Adrenal gland (tissue), 19 donors: ENCODE measurements at regions of chr5 and their contacts with region 1.

Region 1: GRCh38 chr5:141701360-141702119 is 19.5 kb upstream of the ARAP3 start:
- DNase-seq: no peak
- H3K4me3 ChIP-seq: no peak overlapping the region
- H3K27ac ChIP-seq: no peak overlapping the region
- H3K4me1 ChIP-seq: peaks cover 0 to 11% of the 10 kb centered on the region in 2 donors
- H3K27me3 ChIP-seq: peaks cover 28% of the 10 kb centered on the region
- CTCF ChIP-seq: no peak
- POLR2A ChIP-seq: no peak

Region 2: DNA sequence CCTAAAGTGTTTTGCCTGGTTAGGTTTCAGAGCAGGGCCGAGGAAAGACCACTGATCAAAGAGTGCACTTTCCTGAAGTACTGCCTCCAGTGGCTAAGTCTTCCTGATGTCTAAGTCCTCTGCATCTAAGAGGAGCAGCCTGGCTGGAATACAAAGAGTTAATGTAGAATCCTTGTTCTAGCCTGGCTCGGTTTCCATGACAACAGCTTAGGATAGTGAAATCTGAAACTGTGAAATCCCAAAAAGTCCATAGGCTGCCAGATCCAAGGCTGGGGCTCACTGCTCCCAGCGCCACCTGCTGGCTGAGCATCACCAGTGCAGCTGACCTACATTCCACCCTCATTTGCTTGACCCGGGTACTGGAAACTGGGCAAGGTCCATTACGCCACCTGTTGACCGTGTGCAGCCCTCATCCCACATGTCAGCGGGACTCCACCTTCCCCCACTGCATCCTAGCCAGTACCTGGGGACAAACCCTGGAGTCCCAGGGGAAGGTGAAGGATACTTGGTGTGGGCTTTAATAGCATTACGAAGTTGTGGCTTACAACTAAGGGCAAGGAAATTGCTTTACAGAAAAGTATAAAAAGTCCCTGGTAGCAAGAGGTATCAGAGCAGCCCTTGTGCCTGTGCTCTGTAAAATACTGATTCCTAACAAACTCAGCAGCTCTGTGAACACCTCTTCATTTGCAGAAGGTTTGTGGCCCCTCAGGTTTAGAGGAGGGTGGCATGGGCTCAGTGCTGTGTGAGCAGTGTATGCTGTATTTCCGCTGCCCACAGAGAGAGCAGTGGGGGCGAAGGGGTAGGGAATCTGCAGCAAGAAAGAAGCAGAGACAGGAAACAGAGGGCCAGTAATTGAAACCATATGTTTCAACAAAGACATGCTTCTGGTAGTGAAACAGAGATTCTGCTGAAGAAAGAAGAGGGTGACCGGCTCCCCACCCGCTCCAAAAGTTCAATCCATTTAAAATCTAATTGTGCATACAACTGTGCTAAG is 176.6 kb before region 1 on chr5:
- intact Hi-C with region 1: no loop called
- DNase-seq: peak; percentile 91 to 98 (median 94)
- H3K4me3 ChIP-seq: no peak overlapping the region
- H3K27ac ChIP-seq: peak overlapping the region; percentile 6 to 81 (median 36)
- H3K4me1 ChIP-seq: peaks cover 46 to 61% of the 10 kb centered on the region in 2 donors
- H3K27me3 ChIP-seq: no peaks in the 10 kb centered on the region
- CTCF ChIP-seq: peak; percentile 99 to 100 (median 100)
- POLR2A ChIP-seq: no peak

Region 3: GRCh38 chr5:141811287-141812155 is 110.0 kb after region 1 on chr5:
- intact Hi-C with region 1: loop called in 1 of 2 experiments (anchors 10 kb)
- DNase-seq: peak in 2 of 7 donors; percentile 14 to 81
- H3K4me3 ChIP-seq: no peak overlapping the region
- H3K27ac ChIP-seq: peak overlapping the region in 1 of 5 donors; percentile 30
- H3K4me1 ChIP-seq: peaks cover 0 to 1% of the 10 kb centered on the region in 2 donors
- H3K27me3 ChIP-seq: no peaks in the 10 kb centered on the region
- CTCF ChIP-seq: peak; percentile 14 to 49 (median 39)
- POLR2A ChIP-seq: no peak